ENCODE measurements at regions of chr9 and their contacts with region 1.

Region 1: DNA sequence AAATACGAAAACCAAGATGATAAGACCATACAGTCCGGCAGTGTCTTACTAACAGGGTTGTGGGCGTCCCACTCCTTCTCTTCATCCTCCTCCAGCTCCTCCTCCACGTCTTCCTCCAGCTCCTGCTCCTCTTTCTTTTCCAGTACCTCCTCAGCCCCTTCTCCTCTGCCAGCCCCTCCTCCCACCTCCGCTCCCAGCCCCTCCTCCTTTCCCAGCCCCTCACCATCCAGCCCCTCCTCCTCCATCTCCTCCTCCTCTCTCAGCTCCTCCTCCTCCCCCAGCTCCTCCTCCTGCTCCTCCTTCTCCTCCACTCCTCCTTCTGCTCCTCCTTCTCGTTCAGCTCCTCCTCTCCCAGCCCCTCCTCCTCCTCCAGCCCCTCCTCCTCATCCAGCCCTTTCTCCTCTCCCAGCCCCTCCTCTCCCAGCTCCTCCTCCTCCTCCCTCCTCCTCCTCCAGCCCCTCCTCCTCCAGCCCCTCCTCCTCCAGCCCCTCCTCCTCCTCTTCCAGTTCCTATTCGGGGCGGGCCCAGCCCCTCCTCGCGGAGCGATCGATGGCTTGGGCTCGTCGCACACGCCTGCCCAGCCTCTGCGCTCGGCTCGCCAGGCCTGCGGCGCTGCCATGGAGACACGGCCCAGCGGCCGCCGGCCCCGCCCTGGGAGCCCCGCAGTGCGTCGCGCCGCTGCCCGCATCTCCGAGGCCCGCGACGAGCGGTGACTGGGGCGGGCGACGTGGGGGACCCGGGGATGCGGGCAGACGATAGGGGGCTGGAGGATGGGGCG is at the start of gene BRD3OS:
- DNase-seq: peak; percentile 98
- total RNA-seq, gene BRD3OS: 9.0 TPM

Region 2: GRCh38 chr9:133750982-133751649 is 273.9 kb before region 1 on chr9:
- intact Hi-C with region 1: no loop called
- DNase-seq: peak; percentile 39

Region 3: GRCh38 chr9:134067904-134068743 is 43.1 kb after region 1 on chr9 and contains the start of gene BRD3:
- intact Hi-C with region 1: loop called (anchors 5 kb)
- DNase-seq: peak; percentile 91
- total RNA-seq, gene BRD3: 27.5 TPM

Measured in cardiac septum (tissue), 1 donor.